ENCODE measurements at regions of chr9 and their contacts with region 1.

Region 1: DNA sequence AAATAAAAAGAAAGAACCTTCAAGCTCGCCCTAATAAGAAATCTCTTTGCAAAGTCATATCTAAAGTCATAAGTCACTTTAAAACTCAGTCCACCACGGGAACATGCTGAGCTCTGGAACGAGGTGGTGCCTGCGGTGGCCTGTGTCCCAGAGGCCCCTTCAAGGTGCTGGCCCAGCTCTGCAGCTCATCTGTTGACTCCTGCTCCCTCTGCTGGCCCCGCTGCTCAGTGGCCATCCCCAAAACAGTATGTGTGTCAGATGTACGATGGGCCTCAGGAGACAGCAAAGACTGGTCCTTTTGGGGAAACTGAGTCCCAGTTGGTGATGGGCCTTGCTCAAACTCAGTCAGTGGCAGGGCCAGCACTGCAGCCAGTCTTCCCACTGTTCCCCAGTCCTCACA is 22.8 kb upstream of the FOXB2 start:
- DNase-seq: peak; percentile 12
- ATAC-seq: peak; percentile 96
- H3K4me3 ChIP-seq: no peak overlapping the region
- H3K27ac ChIP-seq: no peak overlapping the region
- H3K4me1 ChIP-seq: no peaks in the 10 kb centered on the region
- H3K27me3 ChIP-seq: no peaks in the 10 kb centered on the region
- CTCF ChIP-seq: peak; percentile 77
- EP300 ChIP-seq: no peak
- POLR2A ChIP-seq: no peak
- RAD21 ChIP-seq: peak; percentile 19; the same call in 1 of the 2 replicates

Region 2: GRCh38 chr9:76756268-76756640 is 240.4 kb before region 1 on chr9:
- CTCF ChIA-PET with region 1: no interaction called
- POLR2A ChIA-PET with region 1: no interaction called
- in situ Hi-C with region 1: no loop called
- intact Hi-C with region 1: loop called (anchors 1 kb)
- DNase-seq: peak; percentile 7
- ATAC-seq: peak; percentile 88
- H3K4me3 ChIP-seq: no peak overlapping the region
- H3K27ac ChIP-seq: no peak overlapping the region
- H3K4me1 ChIP-seq: no peaks in the 10 kb centered on the region
- H3K27me3 ChIP-seq: no peaks in the 10 kb centered on the region
- CTCF ChIP-seq: peak; percentile 55
- EP300 ChIP-seq: no peak
- POLR2A ChIP-seq: no peak
- RAD21 ChIP-seq: no peak

Region 3: DNA sequence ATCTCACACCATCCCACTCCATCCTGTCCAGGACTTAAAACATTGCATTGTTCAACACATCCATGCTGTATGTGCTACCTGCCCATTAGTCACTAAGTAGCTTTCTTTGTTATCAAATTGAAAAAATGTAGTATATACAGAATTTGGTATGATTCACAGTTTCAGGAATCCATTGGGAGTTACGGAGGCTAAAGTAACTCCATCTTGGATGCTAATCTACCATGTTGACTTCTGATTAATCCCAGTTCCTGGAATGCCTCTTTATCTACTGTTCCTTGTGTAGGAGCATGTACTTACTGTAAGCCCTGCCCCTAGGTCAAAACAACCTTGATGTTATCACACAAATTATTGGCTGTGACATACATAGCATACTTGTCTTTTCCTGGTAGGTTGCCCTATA is 16.1 kb before region 1 on chr9:
- CTCF ChIA-PET with region 1: no interaction called
- POLR2A ChIA-PET with region 1: no interaction called
- in situ Hi-C with region 1: no loop called
- intact Hi-C with region 1: no loop called
- DNase-seq: no peak
- ATAC-seq: no peak
- H3K4me3 ChIP-seq: no peak overlapping the region
- H3K27ac ChIP-seq: no peak overlapping the region
- H3K4me1 ChIP-seq: no peaks in the 10 kb centered on the region
- H3K27me3 ChIP-seq: peaks cover 0 to 5% of the 10 kb centered on the region in 2 experiments; a peak in 1 of 5 replicates
- CTCF ChIP-seq: no peak
- EP300 ChIP-seq: no peak
- POLR2A ChIP-seq: no peak
- RAD21 ChIP-seq: no peak

Region 4: DNA sequence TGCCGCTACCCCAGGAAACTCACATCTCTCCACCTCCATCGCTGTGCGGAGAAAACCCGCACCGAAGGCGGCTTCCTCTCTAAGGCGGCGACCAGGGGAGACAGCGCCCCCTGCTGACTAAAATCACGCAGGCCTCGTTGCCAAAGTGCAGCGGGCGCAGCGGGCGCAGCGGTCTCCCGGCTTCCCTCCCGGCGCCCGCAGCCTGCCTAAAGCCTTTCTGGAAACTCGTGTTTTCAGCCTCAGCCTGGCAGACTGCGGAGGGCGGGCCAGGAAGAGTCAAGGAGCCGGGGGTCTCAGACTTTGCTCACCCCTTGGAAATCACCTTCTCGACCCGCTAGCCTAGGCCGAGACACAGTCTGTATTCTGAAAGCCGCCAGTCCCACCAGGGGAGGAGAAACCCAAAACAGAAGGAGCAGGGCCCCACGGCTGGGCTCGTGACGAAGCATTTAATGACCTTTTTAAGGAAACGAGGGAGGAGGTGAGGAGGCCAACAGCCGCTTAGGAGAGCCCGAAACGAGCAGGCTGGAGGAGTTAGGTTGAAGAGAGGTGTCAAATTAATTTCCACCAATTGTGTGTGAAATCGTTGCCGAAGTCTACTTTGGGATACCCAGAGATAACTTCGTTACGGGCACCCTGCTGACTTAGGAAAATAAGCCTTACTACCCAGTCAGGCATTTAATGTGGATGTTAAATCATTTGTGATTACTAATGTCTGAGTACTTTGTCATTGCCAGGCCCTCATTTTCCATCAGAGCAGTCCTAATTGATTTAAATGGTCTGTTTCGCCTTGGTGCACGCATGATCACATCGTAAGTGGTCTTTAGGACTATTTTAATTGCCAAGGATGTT is 15.5 kb after region 1 on chr9:
- CTCF ChIA-PET with region 1: no interaction called
- POLR2A ChIA-PET with region 1: no interaction called
- in situ Hi-C with region 1: no loop called
- intact Hi-C with region 1: no loop called
- DNase-seq: peak; percentile 20
- ATAC-seq: peak; percentile 96
- H3K4me3 ChIP-seq: no peak overlapping the region; a peak in 1 of 6 replicates
- H3K27ac ChIP-seq: no peak overlapping the region
- H3K4me1 ChIP-seq: no peaks in the 10 kb centered on the region
- H3K27me3 ChIP-seq: peaks cover 4 to 54% of the 10 kb centered on the region in 2 experiments
- CTCF ChIP-seq: peak; percentile 88
- EP300 ChIP-seq: no peak
- POLR2A ChIP-seq: no peak
- RAD21 ChIP-seq: peak; percentile 38; the same call in 1 of the 2 replicates

Region 5: DNA sequence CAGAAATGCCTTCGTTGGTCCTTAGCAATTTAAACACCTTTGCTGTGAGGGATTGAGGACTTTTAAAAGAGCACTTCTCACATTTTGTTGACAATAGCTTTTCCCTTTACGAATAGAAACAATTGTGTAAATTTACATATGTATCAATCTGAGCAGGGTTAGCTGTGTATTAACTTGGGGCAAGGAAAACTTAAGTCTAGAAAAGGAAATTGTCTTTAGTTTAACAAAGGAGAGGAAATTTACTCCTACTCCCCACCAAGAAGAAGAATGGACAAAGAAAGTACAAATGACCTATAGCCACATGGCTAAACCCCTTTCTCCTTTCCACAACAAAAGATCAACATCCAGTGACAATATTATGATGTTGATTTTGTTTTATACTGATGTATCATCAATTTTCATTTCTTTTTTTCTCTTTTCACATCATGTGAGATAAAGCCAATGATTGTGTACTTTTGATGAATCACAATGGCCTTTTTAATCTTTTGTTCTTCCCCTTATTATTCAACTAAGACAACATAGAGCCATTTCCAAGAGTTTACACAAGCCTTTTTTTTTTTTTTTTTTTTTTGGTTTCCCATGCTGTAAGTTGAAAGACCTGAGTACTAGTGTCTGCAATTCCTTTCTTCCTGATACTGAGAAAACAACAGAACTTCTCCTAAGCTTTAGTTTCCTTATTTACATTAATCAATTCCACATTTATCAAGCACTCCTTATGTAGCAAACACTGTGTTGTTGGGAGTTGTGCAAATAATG is 41.8 kb after region 1 on chr9:
- CTCF ChIA-PET with region 1: no interaction called
- POLR2A ChIA-PET with region 1: no interaction called
- in situ Hi-C with region 1: no loop called
- intact Hi-C with region 1: no loop called
- DNase-seq: no peak
- ATAC-seq: no peak
- H3K4me3 ChIP-seq: no peak overlapping the region
- H3K27ac ChIP-seq: no peak overlapping the region
- H3K4me1 ChIP-seq: no peaks in the 10 kb centered on the region
- H3K27me3 ChIP-seq: no peaks in the 10 kb centered on the region
- CTCF ChIP-seq: no peak
- EP300 ChIP-seq: no peak
- POLR2A ChIP-seq: no peak
- RAD21 ChIP-seq: no peak

Measured in HepG2 (cell line).